AG04449 (cell line): ENCODE measurements at regions of chr10 and their contacts with region 1.

Region 1: DNA sequence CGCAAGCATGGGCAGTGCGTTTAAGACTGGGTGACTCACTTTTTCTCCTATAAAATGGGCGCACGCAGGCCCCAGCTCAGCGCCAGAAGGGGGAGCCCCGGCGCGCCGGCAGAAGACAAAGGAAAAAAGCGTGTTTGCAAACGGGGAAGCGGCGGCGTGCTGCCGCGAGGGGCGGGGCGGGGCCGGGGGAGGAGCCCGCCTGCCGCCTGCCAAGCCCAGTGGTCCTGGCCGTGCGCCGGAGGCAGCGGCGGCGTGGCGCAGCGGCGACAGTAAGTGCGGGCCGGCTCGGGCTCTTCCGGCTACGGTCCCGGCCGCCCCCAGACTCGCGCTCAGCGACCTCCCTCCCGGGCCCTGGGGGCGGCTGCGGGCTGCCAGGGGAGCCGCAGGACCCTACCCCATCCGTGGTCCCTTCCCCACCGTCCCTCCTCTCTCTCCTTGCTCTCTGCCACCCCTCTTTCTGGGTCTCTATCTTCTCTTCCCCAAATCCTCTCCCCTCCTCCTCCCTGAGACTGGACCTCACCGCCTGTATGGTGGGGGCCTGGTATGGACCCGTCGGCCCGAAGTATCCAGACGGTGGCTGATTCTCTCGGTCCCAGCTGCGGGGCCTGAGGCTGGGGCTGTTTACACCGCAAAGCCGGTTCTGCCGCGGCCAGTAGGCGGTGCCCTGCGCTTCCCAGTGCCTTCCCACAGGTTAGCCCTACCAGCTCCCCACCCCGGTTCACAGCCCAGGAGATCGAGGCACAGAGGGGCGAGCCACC is at the start of gene SLC29A3:
- DNase-seq: no peak
- H3K4me3 ChIP-seq: peak within 1 kb of the TSS; percentile 72
- CTCF ChIP-seq: peak; percentile 88

Region 2: DNA sequence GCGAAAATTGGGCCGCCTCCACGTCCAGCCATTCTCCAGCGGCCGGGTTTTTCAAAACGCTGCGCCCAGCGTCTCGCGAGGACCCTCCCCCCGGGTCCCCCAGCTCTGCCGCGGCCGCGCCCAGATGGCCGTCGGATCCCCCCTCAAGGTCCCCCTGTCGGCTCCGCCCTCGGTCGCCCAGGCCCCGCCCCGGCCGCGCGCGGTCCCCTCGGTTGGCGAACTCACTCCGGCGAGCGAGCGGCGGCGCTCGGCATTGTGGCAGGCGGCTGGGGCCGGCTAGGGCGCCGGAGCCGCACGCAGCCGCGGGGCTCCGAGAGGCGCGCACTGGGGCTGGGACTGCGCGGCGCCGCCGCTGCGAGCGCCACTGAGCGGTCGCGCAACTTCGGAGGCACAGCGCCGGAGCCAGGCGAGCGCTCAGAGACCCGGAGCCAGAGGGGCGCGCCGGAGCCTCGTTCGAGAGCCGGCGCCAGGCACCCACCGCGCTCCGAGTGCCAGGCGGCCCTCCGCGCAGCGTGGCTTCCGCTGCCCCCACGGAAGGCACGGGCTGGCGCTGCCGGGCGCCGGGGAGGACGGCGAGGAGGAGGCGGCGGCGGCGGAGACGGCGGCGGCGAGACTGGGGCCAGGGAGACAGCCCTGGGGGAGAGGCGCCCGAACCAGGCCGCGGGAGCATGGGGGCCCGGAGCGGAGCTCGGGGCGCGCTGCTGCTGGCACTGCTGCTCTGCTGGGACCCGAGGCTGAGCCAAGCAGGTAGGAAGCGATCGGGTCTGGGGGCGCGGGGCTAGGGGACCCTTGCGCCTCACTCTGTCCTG is 106.7 kb before region 1 on chr10 and contains the start of gene UNC5B:
- CTCF ChIA-PET with region 1: no interaction called
- POLR2A ChIA-PET with region 1: no interaction called
- DNase-seq: no peak
- H3K4me3 ChIP-seq: peak within 1 kb of the TSS; percentile 73
- CTCF ChIP-seq: peak; percentile 41

Region 3: GRCh38 chr10:71270301-71271220 is 48.7 kb before region 1 on chr10:
- CTCF ChIA-PET with region 1: no interaction called
- POLR2A ChIA-PET with region 1: no interaction called
- DNase-seq: no peak
- H3K4me3 ChIP-seq: no peak overlapping the region
- CTCF ChIP-seq: peak; percentile 73

Region 4: DNA sequence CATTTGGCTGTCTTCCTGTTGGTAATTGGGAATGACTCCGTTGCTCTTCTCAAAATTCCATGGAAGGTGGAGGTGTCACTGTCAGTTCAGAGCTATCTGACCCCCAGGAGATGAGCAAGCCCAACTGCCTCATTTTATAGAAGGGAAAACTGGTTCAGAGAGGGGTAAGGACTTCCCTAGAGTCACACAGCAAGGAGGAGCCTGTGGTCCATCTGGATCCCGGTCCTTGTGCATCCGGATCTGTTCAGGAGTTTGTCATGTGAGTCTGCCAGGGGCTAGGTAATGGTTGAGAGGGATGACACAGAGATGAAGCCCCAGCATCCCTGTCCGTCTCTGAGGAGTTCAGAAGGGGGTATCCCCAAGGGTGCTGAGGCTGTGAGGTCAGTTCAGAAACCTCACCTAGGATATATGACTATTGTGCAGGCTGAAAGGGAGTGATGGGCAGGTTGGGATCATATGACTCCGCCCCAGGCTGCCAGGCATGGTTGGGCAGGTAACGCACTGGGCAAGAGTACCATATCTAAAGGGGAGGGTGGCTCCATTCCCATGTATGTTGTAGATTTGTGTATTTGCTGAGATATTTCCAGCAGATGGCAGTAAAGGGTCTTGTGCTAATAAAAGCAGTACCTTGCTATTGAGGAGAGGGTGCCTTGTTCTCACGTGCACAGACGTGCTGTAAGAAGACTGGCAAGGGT is 16.2 kb before region 1 on chr10:
- CTCF ChIA-PET with region 1: interaction called, 30 read pairs
- POLR2A ChIA-PET with region 1: no interaction called
- DNase-seq: peak; percentile 17
- H3K4me3 ChIP-seq: no peak overlapping the region
- CTCF ChIP-seq: peak; percentile 30

Region 5: GRCh38 chr10:71333129-71333887 is 14.1 kb after region 1 on chr10:
- CTCF ChIA-PET with region 1: interaction called, 34 read pairs
- POLR2A ChIA-PET with region 1: no interaction called
- DNase-seq: no peak
- H3K4me3 ChIP-seq: no peak overlapping the region
- CTCF ChIP-seq: no peak

Region 6: DNA sequence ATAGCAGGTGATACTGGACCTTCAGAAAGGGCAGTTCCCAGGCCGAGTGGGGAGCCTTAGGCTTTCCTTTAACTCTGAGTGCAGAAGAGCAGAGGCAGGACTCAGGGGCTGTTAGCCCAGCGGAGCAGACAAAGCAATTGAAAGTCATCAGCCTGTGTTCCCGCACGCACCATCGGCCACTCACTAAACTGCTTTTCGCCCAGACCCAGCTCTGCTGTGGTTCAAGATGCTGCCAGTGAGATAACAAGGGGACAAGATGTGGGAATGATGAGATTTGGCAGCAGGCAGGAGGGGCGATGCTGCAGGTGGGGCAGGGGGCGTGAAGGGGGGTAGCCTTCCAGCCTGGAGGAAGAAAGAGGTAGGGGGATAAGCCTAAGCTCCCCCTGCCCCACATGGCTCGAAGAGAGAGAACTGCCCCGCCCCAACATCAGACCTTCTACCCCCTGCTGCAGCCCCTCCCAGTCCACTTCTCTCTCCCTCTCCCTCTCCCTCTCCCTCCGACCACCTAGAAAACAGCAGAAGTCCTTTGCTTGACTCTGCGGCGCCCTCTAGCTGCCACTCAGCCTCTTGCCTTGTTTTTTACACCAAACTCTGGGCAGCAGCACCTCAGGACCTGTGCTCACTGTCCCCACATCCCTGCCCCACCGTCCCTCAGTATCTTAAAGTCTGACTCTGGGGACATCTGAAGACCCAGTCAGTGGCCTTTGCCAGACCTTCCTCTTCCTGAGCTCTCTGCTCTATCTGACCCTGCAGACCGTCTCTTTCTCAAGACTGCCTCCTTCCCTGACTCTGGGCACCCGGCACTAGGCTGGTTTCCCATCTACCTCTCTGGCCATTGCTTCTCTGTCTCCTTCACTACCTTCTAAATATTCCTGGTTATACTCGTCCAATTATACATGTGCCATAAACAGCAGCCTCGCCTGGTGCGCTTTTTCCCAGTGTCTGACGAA is 289.9 kb after region 1 on chr10:
- CTCF ChIA-PET with region 1: interaction called, 96 read pairs
- POLR2A ChIA-PET with region 1: no interaction called
- DNase-seq: no peak
- H3K4me3 ChIP-seq: no peak overlapping the region
- CTCF ChIP-seq: peak; percentile 86

Region 7: DNA sequence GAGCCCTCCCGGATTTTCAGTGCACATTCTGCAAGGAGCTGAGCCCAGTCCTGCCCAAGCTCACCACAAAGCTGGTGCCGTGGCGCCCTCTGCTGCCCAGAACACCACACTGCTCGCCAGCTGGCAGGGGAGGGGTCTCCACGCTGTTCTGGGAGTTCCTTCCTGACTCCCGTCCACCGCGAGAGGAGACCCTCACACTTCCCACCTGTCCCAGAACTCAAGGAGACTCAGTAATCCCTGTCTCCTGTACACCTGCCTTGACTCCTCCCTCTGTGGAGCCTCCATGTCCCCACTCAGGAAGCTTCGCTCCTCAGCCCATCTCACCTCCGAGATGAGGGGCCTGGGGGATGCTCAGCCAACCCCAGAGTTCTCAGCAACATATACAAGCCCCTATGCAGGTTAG is 389.1 kb after region 1 on chr10:
- CTCF ChIA-PET with region 1: interaction called, 57 read pairs
- POLR2A ChIA-PET with region 1: no interaction called
- DNase-seq: no peak
- H3K4me3 ChIP-seq: no peak overlapping the region
- CTCF ChIP-seq: peak; percentile 77

Region 8: GRCh38 chr10:71713135-71714030 is 394.2 kb after region 1 on chr10:
- CTCF ChIA-PET with region 1: interaction called, 57 read pairs
- POLR2A ChIA-PET with region 1: no interaction called
- DNase-seq: peak; percentile 4
- H3K4me3 ChIP-seq: no peak overlapping the region
- CTCF ChIP-seq: peak; percentile 20

Region 9: DNA sequence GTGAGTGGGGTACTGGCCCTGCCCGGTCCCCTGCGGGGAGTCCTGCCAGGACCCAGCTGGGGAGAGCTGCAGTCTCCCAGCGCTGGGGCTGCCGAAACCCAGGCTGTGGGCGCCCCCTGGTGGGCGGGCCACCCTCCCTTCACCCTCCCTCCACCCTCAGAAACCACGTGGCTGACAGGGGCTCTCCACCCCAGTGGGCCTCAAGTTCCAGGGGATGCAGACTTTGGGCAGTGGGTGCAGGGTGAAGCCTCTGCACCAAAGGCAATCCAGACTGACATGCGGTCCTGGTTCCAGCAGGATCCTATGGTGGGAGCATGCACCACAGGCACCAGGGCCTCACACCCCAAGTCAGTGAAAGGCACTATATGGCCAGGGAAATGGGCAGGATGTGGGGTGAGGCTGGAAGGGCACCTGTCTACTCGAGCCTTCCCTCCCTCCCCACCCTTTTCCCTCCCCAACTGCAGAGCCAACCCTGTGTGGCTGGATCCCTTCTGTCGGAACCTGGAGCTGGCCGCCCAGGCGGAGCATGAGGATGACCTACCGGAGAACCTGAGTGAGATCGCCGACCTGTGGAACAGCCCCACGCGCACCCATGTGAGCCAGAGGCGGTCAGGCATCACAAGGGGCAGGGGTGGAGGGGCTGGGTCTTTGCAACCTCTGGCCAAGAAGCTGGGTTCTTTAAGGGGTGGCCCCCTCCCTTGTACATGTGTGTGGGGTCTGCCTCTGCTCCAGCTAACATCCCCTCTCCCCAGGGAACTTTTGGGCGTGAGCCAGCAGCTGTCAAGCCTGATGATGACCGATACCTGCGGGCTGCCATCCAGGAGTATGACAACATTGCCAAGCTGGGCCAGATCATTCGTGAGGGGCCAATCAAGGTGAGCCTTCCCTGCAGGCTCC is 493.0 kb after region 1 on chr10:
- CTCF ChIA-PET with region 1: interaction called, 32 read pairs
- POLR2A ChIA-PET with region 1: no interaction called
- DNase-seq: no peak
- H3K4me3 ChIP-seq: no peak overlapping the region
- CTCF ChIP-seq: peak; percentile 93